ENCODE measurements at regions of chr22 and their contacts with region 1.

Region 1: GRCh38 chr22:37244114-37244921 is at the start of gene RAC2:
- H3K4me3 Mint-ChIP-seq: peak within 1 kb of the TSS; percentile 87
- H3K27ac Mint-ChIP-seq: peak within 1 kb of the TSS; percentile 75
- H3K4me1 Mint-ChIP-seq: peaks cover 70% of the 10 kb centered on the region
- H3K27me3 Mint-ChIP-seq: no peaks in the 10 kb centered on the region

Region 2: DNA sequence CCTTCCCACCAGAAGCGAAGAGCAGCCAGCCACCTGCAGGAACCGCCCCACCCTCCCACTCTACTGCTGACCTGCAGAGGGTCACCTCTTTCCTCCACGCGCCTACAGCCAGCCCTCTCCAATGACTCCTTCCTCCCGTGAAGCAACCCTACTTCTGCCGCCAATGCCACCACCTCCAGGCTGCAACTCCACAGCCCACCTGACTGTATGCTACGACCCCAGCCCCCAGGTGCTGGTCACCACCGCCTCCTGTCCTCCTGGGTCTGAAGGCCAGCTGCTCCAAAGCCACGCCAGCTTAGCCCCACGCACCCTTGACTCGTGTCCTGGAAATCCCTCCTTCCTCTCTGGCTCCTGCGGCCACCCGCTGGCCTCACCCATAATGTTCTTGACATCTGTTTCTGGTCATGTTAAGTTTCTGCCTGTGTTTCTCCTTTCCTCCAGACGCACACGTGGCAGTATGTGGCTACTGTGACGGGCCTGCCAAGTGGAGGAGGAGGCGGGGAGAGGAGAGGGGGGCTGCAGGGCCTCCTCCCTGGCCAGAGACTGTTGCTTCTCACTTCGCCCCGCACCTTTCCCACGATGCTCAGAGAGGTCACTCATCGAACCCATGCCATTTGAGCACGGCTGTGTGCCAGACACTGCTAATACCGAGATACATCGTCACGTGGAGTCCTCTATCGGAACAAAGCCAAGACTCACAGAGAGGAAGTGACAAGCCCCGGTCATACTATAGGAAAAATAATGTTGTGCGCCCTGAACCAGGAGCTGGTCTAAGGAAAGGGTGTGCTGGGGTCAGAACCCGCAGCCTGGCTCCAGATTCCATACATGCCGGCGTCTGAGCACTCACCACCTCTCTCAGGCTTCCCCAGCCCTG is 67.9 kb before region 1 on chr22:
- intact Hi-C with region 1: no loop called
- H3K4me3 Mint-ChIP-seq: peak overlapping the region; percentile 53
- H3K27ac Mint-ChIP-seq: peak overlapping the region; percentile 86
- H3K4me1 Mint-ChIP-seq: peaks cover 39% of the 10 kb centered on the region
- H3K27me3 Mint-ChIP-seq: peaks cover 26% of the 10 kb centered on the region

Region 3: DNA sequence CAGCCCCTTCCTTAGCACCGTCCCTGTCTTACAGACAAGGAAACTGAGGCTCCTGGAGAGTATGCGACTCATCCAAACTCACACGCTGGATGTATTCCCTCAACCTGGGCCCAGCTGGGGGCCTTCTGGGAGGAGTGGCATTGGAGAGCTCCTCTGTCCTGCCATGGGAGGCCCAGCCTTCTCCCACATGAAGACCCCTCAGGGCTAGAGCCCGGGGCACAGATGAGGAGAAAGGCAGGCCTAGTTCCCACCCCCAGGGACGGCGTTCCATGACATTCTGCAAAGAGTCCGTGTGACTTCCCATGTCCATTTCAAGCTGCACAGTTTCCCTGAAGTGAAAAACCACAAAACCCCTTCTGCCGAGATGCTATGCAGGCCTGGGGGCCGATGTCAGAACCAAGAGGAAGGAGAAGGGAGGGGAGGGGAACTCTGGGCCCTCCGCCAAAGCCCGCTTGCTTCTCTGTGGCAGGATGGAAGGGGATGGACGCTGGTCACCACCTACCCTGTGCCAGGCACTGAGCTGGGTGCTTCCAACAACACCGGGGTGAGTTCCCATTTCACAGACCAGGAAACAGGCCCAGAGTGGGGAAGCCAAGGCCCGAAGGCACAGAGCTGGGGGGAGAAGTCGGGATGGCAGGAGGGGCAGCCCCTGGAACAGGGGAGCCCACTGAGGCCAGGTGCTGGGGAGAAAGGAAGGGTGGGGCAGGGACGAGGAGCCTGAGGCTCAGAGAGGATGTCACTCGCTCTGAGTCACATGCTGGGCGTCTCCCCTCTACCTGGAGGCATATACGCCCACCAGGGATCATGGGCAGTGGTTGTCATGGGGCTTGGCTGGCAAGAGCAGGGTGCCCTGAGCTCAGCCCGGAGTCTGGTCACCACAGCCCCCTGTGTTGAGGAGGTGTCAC is 16.0 kb before region 1 on chr22:
- intact Hi-C with region 1: loop called (anchors 1 kb)
- H3K4me3 Mint-ChIP-seq: peak overlapping the region; percentile 61
- H3K27ac Mint-ChIP-seq: peak overlapping the region; percentile 94
- H3K4me1 Mint-ChIP-seq: peaks cover 91% of the 10 kb centered on the region
- H3K27me3 Mint-ChIP-seq: no peaks in the 10 kb centered on the region

Measured in dendritic cell treated with granulocyte-macrophage colony-stimulating factor and Interleukin-4, amounts not matched to agents 40 ng/mL and 50 ng/mL, for 4 days (primary cell).